Cardiac septum (tissue), 1 donor: ENCODE measurements at regions of chr10 and their contacts with region 1.

Region 1: DNA sequence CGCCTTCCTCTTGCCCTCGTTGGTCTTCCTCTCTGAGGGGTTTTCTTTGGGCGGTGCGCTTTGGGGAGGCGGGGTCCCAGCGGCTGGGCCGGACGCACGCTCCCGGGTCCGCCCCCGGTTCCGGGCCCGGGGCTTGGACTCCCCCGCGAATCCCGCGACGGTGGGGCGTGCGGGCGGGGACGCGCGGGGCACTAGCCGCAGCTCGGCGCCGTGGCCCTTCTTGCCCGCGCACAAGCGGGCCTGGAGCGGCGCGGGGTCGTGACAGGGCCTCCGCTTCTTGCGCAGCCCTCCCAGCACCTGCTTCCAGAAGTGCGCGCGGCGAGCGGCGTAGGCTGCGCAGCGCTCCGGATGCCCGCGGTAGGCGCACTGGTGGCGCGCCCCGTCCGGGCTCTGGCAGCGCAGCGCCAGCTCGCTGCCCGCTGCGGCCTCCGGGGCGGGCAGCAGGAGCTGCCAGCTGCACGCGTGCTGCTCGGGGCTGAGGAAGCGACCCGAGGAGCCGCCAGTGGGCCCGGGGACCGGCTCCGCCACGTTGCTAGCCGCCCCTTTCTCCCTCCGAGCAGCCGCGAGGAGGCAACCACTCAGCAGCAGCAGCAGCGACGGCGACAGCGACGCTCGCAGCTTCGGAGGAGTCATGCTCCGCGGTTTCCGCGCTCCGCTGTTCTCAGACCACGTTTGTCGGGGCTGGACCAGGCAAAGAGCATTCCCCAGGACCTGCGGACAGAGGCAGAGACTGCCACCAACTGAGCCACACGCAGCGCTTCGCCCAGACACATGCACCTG is 759 bp downstream of the FGFBP3 start:
- DNase-seq: peak; percentile 88

Region 2: GRCh38 chr10:91409869-91410637 is 498.5 kb before region 1 on chr10 and contains the start of gene HECTD2:
- intact Hi-C with region 1: loop called (anchors 5 kb)
- DNase-seq: peak; percentile 85
- total RNA-seq, gene HECTD2: 13.2 TPM

Region 3: DNA sequence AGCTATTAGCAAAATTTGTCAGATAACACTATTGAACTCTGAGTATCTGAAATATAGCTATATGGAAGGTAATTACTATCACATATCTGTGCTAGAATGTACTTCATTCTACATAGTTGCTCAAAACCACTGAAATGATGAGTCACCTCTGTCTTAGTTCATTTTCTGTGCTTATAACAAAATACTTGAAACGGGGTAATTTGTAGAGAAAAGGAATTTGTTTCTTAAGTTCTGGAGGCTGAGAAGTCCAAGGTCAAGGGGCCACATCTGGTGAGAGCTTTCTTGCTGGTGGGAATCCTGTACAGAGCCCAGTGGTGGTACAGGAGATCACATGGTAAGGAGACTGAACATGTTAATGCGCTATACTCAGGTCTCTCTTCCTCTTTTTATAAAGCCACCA is 152.2 kb before region 1 on chr10:
- intact Hi-C with region 1: loop called (anchors 2 kb)
- DNase-seq: no peak

Region 4: GRCh38 chr10:91797874-91798648 is 110.5 kb before region 1 on chr10 and contains the start of gene TNKS2:
- intact Hi-C with region 1: loop called (anchors 5 kb)
- DNase-seq: peak; percentile 97
- total RNA-seq, gene TNKS2: 15.9 TPM

Region 5: DNA sequence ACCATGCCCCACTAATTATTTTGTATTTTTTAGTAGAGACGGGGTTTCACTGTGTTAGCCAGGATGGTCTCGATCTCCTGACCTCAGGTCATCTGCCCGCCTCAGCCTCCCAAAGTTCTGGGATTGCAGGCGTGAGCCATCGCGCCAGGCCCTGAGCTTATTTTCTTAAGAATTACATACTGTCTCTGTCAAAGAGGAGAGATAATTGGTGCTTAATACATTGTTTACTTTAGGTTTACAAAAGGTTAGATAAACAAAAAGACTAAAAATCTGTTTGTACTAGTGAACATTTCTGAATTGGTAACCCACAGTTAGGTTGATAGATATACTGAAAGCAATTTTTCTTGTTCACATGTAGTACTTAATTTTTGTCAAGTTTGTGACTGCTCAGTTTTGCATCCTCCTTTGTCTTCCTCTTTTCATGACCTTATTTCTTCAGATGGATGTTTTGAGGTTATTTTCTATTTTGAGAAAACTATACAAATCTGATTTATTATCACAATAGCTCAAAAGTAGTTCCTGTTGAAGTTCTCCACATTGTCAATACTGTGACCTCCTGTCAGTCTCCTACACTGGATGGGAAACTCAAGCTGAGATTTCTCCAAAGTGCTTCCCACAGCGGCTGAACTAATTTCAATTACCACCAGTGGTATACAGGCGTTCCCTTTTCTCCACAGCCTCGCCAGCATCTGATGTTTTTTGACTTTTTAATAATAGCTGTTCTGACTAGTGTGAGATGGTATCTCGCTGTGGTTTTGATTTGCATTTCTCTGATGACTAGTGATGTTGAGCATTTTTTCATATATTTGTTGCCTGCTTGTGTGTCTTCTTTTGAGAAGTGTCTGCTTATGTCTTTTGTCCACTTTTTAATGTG is 803.7 kb after region 1 on chr10:
- intact Hi-C with region 1: no loop called
- DNase-seq: no peak